ENCODE measurements at regions of chr21 and their contacts with region 1.

Region 1: DNA sequence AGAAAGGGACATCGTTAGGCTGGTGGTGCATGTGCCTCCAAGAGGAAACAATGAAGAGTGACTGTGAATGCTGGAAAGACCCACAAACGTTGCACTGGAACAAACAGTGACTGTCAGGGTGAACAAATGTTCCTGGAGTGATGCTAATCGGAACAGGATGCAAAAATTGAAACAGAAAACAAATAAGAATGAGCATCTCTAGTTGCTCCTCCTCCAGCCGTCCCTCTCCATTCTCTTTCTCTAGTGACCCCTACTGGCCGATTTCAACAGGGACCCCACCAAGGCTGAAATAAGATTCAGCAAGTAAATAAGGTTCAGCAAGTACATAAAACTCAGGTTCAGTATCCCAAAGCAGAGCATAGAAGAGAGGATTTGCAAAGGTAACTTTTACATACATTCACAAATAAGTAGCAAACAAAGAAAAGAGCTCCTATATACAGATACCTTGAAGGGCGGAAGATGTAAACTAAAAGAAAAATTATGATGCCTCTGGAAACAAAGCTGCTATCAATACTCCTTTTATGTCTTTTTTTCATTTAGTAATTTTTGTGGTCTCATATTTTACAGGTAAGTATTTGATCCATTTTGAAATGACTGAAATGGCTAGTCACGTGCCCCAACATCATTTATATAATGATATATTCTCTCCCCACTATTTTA is 836.1 kb upstream of the ADAMTS5 start:
- DNase-seq: peak; percentile 53
- H3K4me3 Mint-ChIP-seq: no peak overlapping the region
- H3K27ac Mint-ChIP-seq: no peak overlapping the region
- H3K4me1 Mint-ChIP-seq: peaks cover 8% of the 10 kb centered on the region
- H3K27me3 Mint-ChIP-seq: no peaks in the 10 kb centered on the region
- CTCF ChIP-seq: peak; percentile 42

Region 2: DNA sequence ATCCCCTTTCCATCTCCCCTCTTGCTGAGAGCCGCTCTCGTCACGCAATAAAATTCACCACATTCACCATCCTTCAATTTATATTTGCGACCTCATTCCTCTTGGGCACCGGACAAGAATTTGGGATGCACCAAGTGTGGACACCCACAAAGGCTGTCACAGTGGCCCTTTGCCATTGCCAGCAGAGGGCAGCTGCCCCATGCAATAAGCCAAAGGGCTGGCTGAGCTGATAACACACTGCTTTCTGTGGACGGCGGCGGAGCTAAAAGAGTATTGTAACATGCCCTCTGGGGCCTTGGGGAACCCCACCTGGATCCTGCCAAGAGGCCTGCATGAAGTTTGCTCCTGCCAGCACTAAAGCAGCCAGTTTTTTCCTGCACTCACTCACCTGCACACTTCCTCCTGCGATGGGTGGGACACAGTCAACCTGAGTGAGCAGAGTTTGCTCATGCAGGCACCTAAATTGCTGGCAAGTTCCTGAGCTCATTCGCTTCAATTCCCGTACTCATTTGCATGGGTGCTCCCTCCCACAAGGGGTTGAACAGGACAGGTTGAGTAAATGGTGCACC is 43.8 kb before region 1 on chr21:
- CTCF ChIA-PET with region 1: interaction called, 3 read pairs
- intact Hi-C with region 1: loop called (anchors 5 kb)
- DNase-seq: peak; percentile 43
- H3K4me3 Mint-ChIP-seq: no peak overlapping the region
- H3K27ac Mint-ChIP-seq: no peak overlapping the region
- H3K4me1 Mint-ChIP-seq: peaks cover 26% of the 10 kb centered on the region
- H3K27me3 Mint-ChIP-seq: no peaks in the 10 kb centered on the region
- CTCF ChIP-seq: peak; percentile 62

Region 3: GRCh38 chr21:28177124-28177523 is 374.2 kb after region 1 on chr21:
- CTCF ChIA-PET with region 1: no interaction called
- intact Hi-C with region 1: no loop called
- DNase-seq: no peak
- H3K4me3 Mint-ChIP-seq: no peak overlapping the region
- H3K27ac Mint-ChIP-seq: no peak overlapping the region
- H3K4me1 Mint-ChIP-seq: no peaks in the 10 kb centered on the region
- H3K27me3 Mint-ChIP-seq: no peaks in the 10 kb centered on the region
- CTCF ChIP-seq: no peak

Measured in Calu3 (cell line).